ENCODE measurements at regions of chr7 and their contacts with region 1.

Region 1: DNA sequence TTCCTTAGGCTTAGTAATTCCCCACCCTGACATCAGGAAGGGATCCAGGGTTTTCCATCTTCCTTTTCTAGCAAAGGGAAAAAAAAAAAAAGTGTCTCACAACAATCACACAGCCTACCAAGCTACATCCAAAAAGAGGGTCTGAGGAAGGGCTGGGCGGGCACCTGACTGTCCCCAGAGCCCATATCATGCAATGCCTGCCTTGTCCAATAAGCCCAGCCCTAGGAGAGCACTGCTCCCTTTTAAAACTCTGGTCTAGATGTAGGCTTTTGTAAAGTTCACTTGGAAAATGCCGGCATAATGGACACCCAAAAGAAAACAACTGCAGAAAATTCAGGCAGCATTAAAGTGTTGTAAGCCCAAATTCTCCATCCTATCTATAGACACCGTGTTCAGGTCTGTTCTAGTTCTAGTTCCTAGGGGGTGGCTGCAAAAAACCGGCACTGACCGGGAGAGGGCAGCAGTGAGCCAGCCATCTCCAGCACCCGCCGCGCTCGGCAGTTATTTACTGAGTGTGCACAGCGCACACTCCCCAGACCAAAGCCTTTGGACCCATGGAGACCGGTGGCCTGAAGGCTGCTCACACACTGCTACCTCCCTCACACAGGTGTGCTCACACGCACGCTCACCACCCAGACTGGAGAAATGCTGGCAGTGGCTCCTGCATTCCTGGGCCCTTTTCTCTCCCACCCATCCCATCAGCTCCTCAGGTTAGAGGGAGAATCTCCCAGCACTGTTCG is 48.7 kb downstream of the PODXL start:
- DNase-seq: peak; percentile 67
- H3K4me3 Mint-ChIP-seq: no peak overlapping the region
- H3K27ac Mint-ChIP-seq: no peak overlapping the region
- H3K4me1 Mint-ChIP-seq: peaks cover 17% of the 10 kb centered on the region
- H3K27me3 Mint-ChIP-seq: peaks cover 3% of the 10 kb centered on the region

Region 2: GRCh38 chr7:130896898-130897514 is 610.8 kb before region 1 on chr7:
- intact Hi-C with region 1: loop called (anchors 10 kb)
- DNase-seq: peak; percentile 62
- H3K4me3 Mint-ChIP-seq: peak overlapping the region; percentile 26
- H3K27ac Mint-ChIP-seq: peak overlapping the region; percentile 86
- H3K4me1 Mint-ChIP-seq: peaks cover 73% of the 10 kb centered on the region
- H3K27me3 Mint-ChIP-seq: no peaks in the 10 kb centered on the region

Region 3: GRCh38 chr7:131327626-131328376 is 180.0 kb before region 1 on chr7 and contains the start of gene MKLN1:
- intact Hi-C with region 1: loop called (anchors 10 kb)
- DNase-seq: peak; percentile 85
- H3K4me3 Mint-ChIP-seq: peak within 1 kb of the TSS; percentile 94
- H3K27ac Mint-ChIP-seq: peak within 1 kb of the TSS; percentile 95
- H3K4me1 Mint-ChIP-seq: peaks cover 48% of the 10 kb centered on the region
- H3K27me3 Mint-ChIP-seq: no peaks in the 10 kb centered on the region
- total RNA-seq, gene MKLN1: 38.3 and 40.9 TPM in 2 replicates

Region 4: GRCh38 chr7:131493581-131493980 is 14.2 kb before region 1 on chr7:
- intact Hi-C with region 1: no loop called
- DNase-seq: no peak
- H3K4me3 Mint-ChIP-seq: no peak overlapping the region
- H3K27ac Mint-ChIP-seq: no peak overlapping the region
- H3K4me1 Mint-ChIP-seq: no peaks in the 10 kb centered on the region
- H3K27me3 Mint-ChIP-seq: no peaks in the 10 kb centered on the region

Measured in activated T-helper 2 cell treated with anti-CD3 and anti-CD28 coated beads, Interferon-gamma antibody, Interleukin-2, Interleukin-4, amounts not matched to agents 10 μg/mL and 5 μg/mL and 100 μg/mL, durations not matched to agents 14 hours and 24 hours and 36 hours (primary cell).